ENCODE measurements at regions of chr16 and their contacts with region 1.

Region 1: DNA sequence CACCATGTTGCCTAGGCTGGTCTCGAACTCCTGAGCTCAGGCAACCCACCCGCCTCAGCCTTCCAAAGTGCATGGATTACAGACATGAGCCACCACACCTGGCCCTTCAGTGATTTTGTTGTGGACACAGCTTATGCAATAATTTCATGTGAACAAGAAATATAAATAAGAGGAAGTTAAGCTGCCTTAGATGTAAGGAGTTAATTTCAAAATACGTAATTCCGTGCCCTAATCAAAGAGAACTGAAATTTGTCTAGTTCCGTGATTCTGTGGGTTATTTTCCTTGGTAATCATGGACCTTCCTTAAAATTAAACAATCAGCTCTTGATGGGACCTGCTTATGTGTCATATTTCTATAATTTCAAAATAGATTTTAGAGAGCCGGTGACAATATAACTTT is 11.9 kb downstream of the TVP23A start:
- DNase-seq: peak; percentile 44
- ATAC-seq: peak; percentile 37
- H3K4me3 ChIP-seq: no peak overlapping the region
- H3K4me3 Mint-ChIP-seq: peak overlapping the region; percentile 74
- H3K27ac ChIP-seq: no peak overlapping the region
- H3K27ac Mint-ChIP-seq: peak overlapping the region; percentile 84
- H3K4me1 ChIP-seq: peaks cover 8 to 45% of the 10 kb centered on the region in 2 donors
- H3K4me1 Mint-ChIP-seq: peaks cover 64% of the 10 kb centered on the region
- H3K27me3 ChIP-seq: no peaks in the 10 kb centered on the region
- H3K27me3 Mint-ChIP-seq: no peaks in the 10 kb centered on the region
- CTCF ChIP-seq: no peak

Region 2: DNA sequence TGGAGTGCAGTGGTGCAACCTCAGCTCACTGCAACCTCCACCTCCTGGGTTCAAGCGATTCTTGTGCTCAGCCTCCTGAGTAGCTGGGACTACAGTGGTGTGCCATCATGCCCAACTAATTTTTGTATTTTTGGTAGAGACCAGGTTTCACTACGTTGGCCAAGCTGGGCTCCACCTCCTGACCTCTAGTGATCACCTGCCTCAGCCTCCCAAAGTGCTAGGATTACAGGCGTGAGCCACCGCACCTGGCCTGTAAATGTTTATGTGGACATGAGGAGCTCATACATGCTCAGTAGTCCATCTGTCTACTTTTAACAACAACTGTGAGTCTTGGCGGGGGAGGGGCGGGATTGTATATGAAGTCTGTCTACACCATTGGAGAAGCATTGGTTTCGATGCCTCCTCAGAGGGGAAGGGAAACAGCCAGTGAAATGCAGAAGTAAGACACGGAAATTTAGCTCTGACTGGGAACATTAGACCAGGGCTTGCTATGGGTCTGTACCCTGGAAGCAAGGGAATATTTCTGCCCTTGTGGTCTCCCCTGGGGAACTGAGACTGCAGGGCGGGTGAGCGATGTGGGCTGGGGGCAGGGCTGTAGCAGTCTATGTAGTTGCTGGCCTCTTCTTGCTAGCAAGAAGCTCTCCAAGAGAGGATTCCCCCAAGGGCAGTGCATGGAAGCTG is 53.7 kb before region 1 on chr16:
- CTCF ChIA-PET with region 1: interaction called, 5 read pairs
- POLR2A ChIA-PET with region 1: no interaction called
- intact Hi-C with region 1: loop called (anchors 5 kb)
- DNase-seq: peak; percentile 86
- ATAC-seq: peak; percentile 82
- H3K4me3 ChIP-seq: peak overlapping the region in 1 of 5 experiments; percentile 20
- H3K4me3 Mint-ChIP-seq: peak overlapping the region; percentile 54
- H3K27ac ChIP-seq: peak overlapping the region; percentile 75 to 76
- H3K27ac Mint-ChIP-seq: peak overlapping the region; percentile 73
- H3K4me1 ChIP-seq: peaks cover 19 to 41% of the 10 kb centered on the region in 2 donors
- H3K4me1 Mint-ChIP-seq: peaks cover 52% of the 10 kb centered on the region
- H3K27me3 ChIP-seq: no peaks in the 10 kb centered on the region
- H3K27me3 Mint-ChIP-seq: no peaks in the 10 kb centered on the region
- CTCF ChIP-seq: no peak

Region 3: GRCh38 chr16:10770907-10771306 is 35.8 kb before region 1 on chr16:
- CTCF ChIA-PET with region 1: no interaction called
- POLR2A ChIA-PET with region 1: no interaction called
- intact Hi-C with region 1: loop called (anchors 5 kb)
- DNase-seq: no peak
- ATAC-seq: no peak
- H3K4me3 ChIP-seq: no peak overlapping the region
- H3K4me3 Mint-ChIP-seq: no peak overlapping the region
- H3K27ac ChIP-seq: no peak overlapping the region
- H3K27ac Mint-ChIP-seq: no peak overlapping the region
- H3K4me1 ChIP-seq: peaks cover 4 to 18% of the 10 kb centered on the region in 2 donors
- H3K4me1 Mint-ChIP-seq: peaks cover 25% of the 10 kb centered on the region
- H3K27me3 ChIP-seq: no peaks in the 10 kb centered on the region
- H3K27me3 Mint-ChIP-seq: no peaks in the 10 kb centered on the region
- CTCF ChIP-seq: no peak